Activated CD4-positive, alpha-beta T cell treated with anti-CD3 and anti-CD28 coated beads for 36 hours (primary cell): ENCODE measurements at regions of chr3 and their contacts with region 1.

Region 1: GRCh38 chr3:4466741-4467521 is at the start of gene SUMF1:
- DNase-seq: peak; percentile 88
- ATAC-seq: peak; percentile 98
- H3K4me3 Mint-ChIP-seq: peak within 1 kb of the TSS; percentile 87
- H3K27ac Mint-ChIP-seq: peak within 1 kb of the TSS; percentile 93
- H3K4me1 Mint-ChIP-seq: peaks cover 18% of the 10 kb centered on the region
- H3K27me3 Mint-ChIP-seq: no peaks in the 10 kb centered on the region
- total RNA-seq, gene SUMF1: 3.5 to 4.9 TPM

Region 2: DNA sequence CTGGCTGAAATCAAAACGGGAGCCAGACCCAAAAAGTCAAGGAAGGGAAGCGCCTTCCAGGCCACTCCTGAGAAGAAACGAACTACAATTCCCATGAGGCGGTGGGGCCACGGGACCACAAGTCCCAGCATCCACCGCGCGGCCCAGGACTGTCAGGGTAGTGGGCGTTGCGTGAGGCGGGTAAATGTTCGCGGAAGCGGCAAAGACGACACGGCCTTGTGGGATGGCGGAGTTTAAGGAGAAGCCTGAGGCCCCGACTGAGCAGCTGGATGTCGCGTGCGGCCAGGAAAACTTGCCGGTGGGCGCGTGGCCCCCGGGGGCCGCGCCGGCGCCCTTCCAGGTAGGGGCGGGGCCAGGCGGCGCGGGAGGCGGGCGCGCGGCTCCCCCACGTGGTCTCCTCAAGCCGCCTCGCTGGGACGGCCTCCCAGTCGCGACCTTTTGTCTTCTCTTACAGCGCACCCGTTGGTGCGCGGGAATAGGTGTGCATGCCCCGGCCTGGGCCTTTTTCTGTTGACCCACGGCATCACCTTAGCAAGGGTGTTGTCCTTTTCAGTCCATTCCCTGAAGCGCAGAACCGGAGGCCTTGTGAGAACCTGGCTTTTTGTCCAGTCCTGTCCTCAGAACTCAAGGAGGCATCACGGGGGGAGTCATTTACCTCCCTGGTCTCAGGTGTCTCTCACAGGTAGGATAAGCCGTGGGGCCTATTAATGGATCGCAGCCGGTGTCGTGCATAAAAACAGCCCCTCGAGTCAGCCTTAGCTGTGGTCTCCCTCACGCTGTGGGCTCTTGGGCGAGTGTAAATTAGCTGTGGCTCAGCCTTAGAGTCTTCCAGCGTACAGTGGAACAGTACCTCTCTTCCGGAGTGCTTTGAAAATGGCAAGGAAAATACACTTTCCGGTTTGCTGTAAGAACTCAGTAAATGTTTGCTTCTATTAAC is 163.5 kb before region 1 on chr3 and contains the start of gene SETMAR:
- CTCF ChIA-PET with region 1: interaction called, 4 read pairs
- POLR2A ChIA-PET with region 1: no interaction called
- intact Hi-C with region 1: loop called in 1 of 2 experiments (anchors 1 kb)
- DNase-seq: peak; percentile 93
- ATAC-seq: peak; percentile 96
- H3K4me3 Mint-ChIP-seq: peak within 1 kb of the TSS; percentile 79
- H3K27ac Mint-ChIP-seq: peak within 1 kb of the TSS; percentile 96
- H3K4me1 Mint-ChIP-seq: peaks cover 26% of the 10 kb centered on the region
- H3K27me3 Mint-ChIP-seq: no peaks in the 10 kb centered on the region
- total RNA-seq, gene SETMAR: 19.3 to 19.4 TPM

Region 3: DNA sequence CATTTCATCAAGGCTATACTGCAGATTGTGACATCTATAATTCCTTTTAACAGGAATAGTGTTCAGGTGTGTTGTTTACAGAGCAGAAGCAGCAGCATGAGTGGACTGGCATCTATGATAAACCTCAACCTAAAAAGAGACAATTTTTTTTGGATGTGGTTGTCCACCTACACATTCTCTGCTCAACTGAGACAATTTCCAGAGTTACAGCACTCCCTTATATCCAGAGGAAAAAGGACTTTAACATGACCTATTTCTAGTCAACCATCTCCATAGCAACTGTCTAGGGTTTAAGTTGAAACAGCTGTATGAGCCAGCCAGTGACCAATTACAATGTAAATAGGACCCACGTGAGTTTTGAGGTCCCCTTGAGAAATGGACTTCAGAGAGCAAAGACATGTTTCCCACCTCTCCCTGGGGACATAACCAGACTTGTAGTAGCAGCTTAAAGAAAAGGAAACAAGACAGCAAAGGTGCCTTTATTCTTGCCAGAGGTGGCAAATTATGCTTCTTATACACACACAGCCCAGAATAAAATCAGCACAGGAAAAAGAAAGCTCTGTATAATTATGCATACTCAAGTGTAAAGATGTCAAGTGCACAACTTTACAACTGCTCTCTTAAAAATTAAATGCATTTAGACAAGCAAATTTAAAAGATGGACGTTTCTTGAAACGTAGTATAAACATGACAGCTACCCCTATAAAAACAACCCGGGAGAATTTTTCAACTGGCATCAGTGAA is 40.2 kb before region 1 on chr3:
- CTCF ChIA-PET with region 1: interaction called, 3 read pairs
- POLR2A ChIA-PET with region 1: no interaction called
- intact Hi-C with region 1: loop called in 1 of 2 experiments (anchors 5 kb)
- DNase-seq: no peak
- ATAC-seq: no peak
- H3K4me3 Mint-ChIP-seq: no peak overlapping the region
- H3K27ac Mint-ChIP-seq: no peak overlapping the region
- H3K4me1 Mint-ChIP-seq: peaks cover 27% of the 10 kb centered on the region
- H3K27me3 Mint-ChIP-seq: no peaks in the 10 kb centered on the region